Left ventricle myocardium superior (tissue), 1 donor: ENCODE measurements at regions of chr2 and their contacts with region 1.

Region 1: GRCh38 chr2:168136392-168136977 is 110.9 kb downstream of the STK39 start:
- DNase-seq: no peak
- ATAC-seq: no peak

Region 2: GRCh38 chr2:168246483-168247340 is 110.2 kb after region 1 on chr2:
- intact Hi-C with region 1: loop called (anchors 10 kb)
- DNase-seq: peak; percentile 87
- ATAC-seq: peak; percentile 83